MCF 10A (cell line): ENCODE measurements at regions of chr5 and their contacts with region 1.

Region 1: GRCh38 chr5:67156976-67157583 is 39.5 kb downstream of the CD180 start:
- DNase-seq: peak; percentile 52
- H3K4me3 Mint-ChIP-seq: no peak overlapping the region
- H3K27ac Mint-ChIP-seq: no peak overlapping the region
- H3K4me1 Mint-ChIP-seq: peaks cover 18% of the 10 kb centered on the region
- H3K27me3 Mint-ChIP-seq: no peaks in the 10 kb centered on the region
- CTCF ChIP-seq: peak; percentile 81

Region 2: GRCh38 chr5:66633795-66634194 is 523.3 kb before region 1 on chr5:
- CTCF ChIA-PET with region 1: no interaction called
- POLR2A ChIA-PET with region 1: no interaction called
- intact Hi-C with region 1: no loop called
- DNase-seq: no peak
- H3K4me3 Mint-ChIP-seq: no peak overlapping the region
- H3K27ac Mint-ChIP-seq: no peak overlapping the region
- H3K4me1 Mint-ChIP-seq: no peaks in the 10 kb centered on the region
- H3K27me3 Mint-ChIP-seq: peaks cover 6% of the 10 kb centered on the region
- CTCF ChIP-seq: no peak

Region 3: GRCh38 chr5:67142816-67143215 is 14.3 kb before region 1 on chr5:
- CTCF ChIA-PET with region 1: interaction called, 15 read pairs
- POLR2A ChIA-PET with region 1: interaction called, 3 read pairs
- intact Hi-C with region 1: no loop called
- DNase-seq: no peak
- H3K4me3 Mint-ChIP-seq: no peak overlapping the region
- H3K27ac Mint-ChIP-seq: no peak overlapping the region
- H3K4me1 Mint-ChIP-seq: no peaks in the 10 kb centered on the region
- H3K27me3 Mint-ChIP-seq: no peaks in the 10 kb centered on the region
- CTCF ChIP-seq: no peak